Endothelial cell of umbilical vein (primary cell): ENCODE measurements at regions of chr11 and their contacts with region 1.

Region 1: GRCh38 chr11:76680518-76681425 is 10.2 kb upstream of the LRRC32 start:
- DNase-seq: peak; percentile 74
- H3K4me3 ChIP-seq: no peak overlapping the region
- H3K27ac ChIP-seq: no peak overlapping the region
- H3K4me1 ChIP-seq: no peaks in the 10 kb centered on the region
- H3K27me3 ChIP-seq: no peaks in the 10 kb centered on the region
- CTCF ChIP-seq: peak; percentile 78 to 89
- POLR2A ChIP-seq: no peak

Region 2: DNA sequence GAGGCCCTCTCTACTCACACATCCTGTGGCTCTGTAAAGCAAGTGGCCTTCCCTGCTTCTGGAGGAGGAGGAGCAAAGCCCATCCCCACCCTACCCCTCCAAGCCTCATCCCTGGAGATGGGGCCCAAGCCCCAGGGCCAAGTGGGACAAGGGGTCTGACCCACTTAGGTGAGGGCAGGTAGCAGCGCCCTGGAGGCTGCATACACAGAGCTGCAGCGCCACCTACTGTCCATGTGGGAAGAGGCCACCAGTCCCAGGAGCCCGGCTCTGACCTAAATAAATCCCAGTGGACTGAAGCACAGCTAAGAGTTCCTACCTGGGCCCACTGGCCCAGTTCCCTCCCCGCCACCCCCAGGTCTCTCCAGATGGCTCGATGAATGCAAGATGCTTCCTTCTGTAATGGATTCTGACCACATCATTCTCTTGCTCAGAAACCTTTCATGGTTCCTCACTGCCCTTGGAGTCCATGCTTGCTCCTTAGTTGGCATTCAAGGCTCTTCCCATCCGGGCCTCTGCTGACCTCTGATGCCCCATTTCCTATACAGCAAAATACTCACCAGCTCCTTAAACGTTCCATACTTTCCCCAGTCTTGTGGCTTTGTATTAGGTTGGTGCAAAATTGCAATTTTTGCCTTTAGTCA is 361.9 kb before region 1 on chr11:
- CTCF ChIA-PET with region 1: interaction called, 12 read pairs
- POLR2A ChIA-PET with region 1: no interaction called
- dilution Hi-C with region 1: no loop called
- intact Hi-C with region 1: loop called (anchors 1 kb)
- DNase-seq: peak; percentile 74
- H3K4me3 ChIP-seq: no peak overlapping the region
- H3K27ac ChIP-seq: no peak overlapping the region
- H3K4me1 ChIP-seq: no peaks in the 10 kb centered on the region
- H3K27me3 ChIP-seq: peaks cover 16 to 23% of the 10 kb centered on the region in 2 experiments
- CTCF ChIP-seq: peak; percentile 84 to 94
- POLR2A ChIP-seq: no peak

Region 3: GRCh38 chr11:76512851-76513653 is 167.7 kb before region 1 on chr11:
- CTCF ChIA-PET with region 1: interaction called, 12 read pairs
- POLR2A ChIA-PET with region 1: no interaction called
- dilution Hi-C with region 1: no loop called
- intact Hi-C with region 1: loop called (anchors 2 kb)
- DNase-seq: peak; percentile 58
- H3K4me3 ChIP-seq: no peak overlapping the region
- H3K27ac ChIP-seq: no peak overlapping the region
- H3K4me1 ChIP-seq: peaks cover 10% of the 10 kb centered on the region
- H3K27me3 ChIP-seq: no peaks in the 10 kb centered on the region
- CTCF ChIP-seq: peak; percentile 14 to 15
- POLR2A ChIP-seq: no peak

Region 4: GRCh38 chr11:76598426-76598839 is 82.3 kb before region 1 on chr11:
- CTCF ChIA-PET with region 1: interaction called, 60 read pairs
- POLR2A ChIA-PET with region 1: no interaction called
- dilution Hi-C with region 1: no loop called
- intact Hi-C with region 1: loop called (anchors 1 kb)
- DNase-seq: peak; percentile 42
- H3K4me3 ChIP-seq: no peak overlapping the region
- H3K27ac ChIP-seq: no peak overlapping the region
- H3K4me1 ChIP-seq: peaks cover 9% of the 10 kb centered on the region
- H3K27me3 ChIP-seq: no peaks in the 10 kb centered on the region
- CTCF ChIP-seq: peak; percentile 22 to 49
- POLR2A ChIP-seq: no peak

Region 5: DNA sequence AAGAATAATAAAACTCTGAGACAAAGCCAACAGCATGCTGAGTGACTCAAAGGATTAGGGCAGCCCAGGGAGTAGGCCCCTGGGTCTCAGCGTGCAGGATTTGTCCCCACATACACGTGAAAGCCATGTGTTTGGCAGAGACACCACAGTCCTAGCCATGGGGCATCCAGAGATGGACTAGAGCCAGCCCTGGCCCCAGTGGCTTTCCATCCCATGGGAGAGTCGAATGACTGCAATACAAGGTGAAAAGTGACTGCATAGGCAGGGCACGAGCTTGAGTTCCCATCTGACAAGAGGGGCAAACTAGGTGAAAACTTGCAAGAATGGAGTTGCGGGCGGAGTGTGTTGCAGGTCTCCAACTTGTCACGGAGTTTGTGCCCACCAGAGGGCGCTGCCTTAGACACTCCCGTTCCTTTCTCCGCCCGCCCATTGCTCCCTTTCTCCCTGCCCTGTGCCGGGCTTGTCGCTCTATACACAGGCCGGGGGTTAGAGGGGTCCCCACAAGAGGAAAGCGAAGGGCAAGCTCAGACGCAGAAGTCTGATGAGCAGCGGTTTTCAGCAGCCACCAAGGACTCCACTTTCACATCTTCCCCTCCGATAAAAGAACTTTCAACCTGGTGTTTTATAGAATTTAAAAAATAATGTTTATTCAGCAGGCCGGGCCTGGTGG is 126.6 kb after region 1 on chr11:
- CTCF ChIA-PET with region 1: no interaction called
- POLR2A ChIA-PET with region 1: no interaction called
- dilution Hi-C with region 1: no loop called
- intact Hi-C with region 1: no loop called
- DNase-seq: peak; percentile 76
- H3K4me3 ChIP-seq: no peak overlapping the region
- H3K27ac ChIP-seq: no peak overlapping the region
- H3K4me1 ChIP-seq: peaks cover 3% of the 10 kb centered on the region
- H3K27me3 ChIP-seq: no peaks in the 10 kb centered on the region
- CTCF ChIP-seq: peak; percentile 80 to 87
- POLR2A ChIP-seq: no peak